Gastrocnemius medialis (tissue), 4 donors: ENCODE measurements at regions of chr17 and their contacts with region 1.

Region 1: GRCh38 chr17:10992106-10992880 is 154.4 kb upstream of the PIRT start:
- DNase-seq: no peak
- ATAC-seq: no peak
- H3K4me3 ChIP-seq: no peak overlapping the region
- H3K27ac ChIP-seq: no peak overlapping the region
- H3K4me1 ChIP-seq: no peaks in the 10 kb centered on the region
- H3K27me3 ChIP-seq: no peaks in the 10 kb centered on the region
- CTCF ChIP-seq: no peak
- POLR2A ChIP-seq: no peak

Region 2: DNA sequence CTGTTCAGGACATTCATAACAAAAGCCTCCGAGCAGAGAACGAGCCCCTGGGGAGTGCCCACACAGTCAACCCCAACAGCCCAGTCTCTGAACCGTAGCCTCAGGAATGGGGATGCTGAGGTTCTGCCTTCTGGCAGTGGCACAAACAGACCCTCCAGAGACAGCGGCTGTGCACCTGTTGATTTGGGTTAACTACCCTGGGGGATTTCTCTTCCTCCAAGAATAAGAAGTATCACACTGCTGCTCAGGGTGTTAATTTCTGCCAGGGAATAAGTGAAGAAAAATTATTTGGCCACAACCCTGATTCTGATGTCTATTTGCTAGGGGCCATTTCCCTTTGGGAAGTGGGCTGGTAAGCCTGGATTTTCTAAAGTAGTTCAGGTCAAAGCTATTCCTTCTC is 103.4 kb before region 1 on chr17:
- in situ Hi-C with region 1: no loop called
- intact Hi-C with region 1: no loop called
- DNase-seq: no peak
- ATAC-seq: no peak
- H3K4me3 ChIP-seq: no peak overlapping the region
- H3K27ac ChIP-seq: no peak overlapping the region
- H3K4me1 ChIP-seq: no peaks in the 10 kb centered on the region
- H3K27me3 ChIP-seq: peaks cover 0 to 3% (median 0%) of the 10 kb centered on the region in 3 donors
- CTCF ChIP-seq: no peak
- POLR2A ChIP-seq: no peak

Region 3: DNA sequence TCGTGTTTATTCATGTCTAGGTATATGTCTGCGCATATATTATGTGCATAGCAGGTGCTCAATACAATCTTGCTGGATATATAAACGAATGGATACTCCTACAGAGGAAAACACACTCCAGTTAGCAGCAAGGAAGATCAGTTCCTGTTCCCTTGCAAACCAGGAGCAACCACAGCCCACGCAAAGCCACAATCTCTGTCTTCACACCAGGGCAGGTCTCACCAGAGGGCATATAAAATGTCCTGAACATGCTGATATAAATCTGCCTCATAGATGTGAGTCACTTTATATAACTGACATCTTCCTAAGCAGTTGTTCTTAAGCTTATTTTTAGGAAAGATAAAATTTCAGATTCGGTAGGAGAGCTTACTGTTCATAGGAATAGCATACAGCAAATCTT is 52.9 kb before region 1 on chr17:
- in situ Hi-C with region 1: loop called in 1 of 4 experiments (anchors 10 kb)
- intact Hi-C with region 1: no loop called
- DNase-seq: no peak
- ATAC-seq: no peak
- H3K4me3 ChIP-seq: no peak overlapping the region
- H3K27ac ChIP-seq: no peak overlapping the region
- H3K4me1 ChIP-seq: no peaks in the 10 kb centered on the region
- H3K27me3 ChIP-seq: no peaks in the 10 kb centered on the region
- CTCF ChIP-seq: no peak
- POLR2A ChIP-seq: no peak

Region 4: DNA sequence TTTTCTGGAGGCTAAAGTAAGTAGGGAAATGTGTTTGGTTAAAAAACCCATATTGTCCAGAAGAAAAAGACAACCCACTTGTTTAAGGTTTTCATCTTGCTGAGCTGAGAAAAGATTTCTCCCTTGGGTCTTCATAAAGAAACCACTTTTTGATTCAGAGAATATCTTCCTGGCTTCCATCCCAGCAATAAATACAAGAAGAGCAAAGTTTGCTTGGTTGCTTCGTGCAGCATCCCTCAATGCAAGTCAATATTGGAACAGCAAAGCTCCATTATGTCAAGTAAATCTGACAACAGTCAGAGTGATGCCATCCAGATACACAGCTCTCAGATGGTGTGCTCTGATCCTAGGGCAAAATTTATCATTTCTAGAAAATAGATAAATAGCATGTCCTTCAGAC is 35.5 kb before region 1 on chr17:
- in situ Hi-C with region 1: no loop called
- intact Hi-C with region 1: no loop called
- DNase-seq: no peak
- ATAC-seq: no peak
- H3K4me3 ChIP-seq: no peak overlapping the region
- H3K27ac ChIP-seq: no peak overlapping the region
- H3K4me1 ChIP-seq: no peaks in the 10 kb centered on the region
- H3K27me3 ChIP-seq: no peaks in the 10 kb centered on the region
- CTCF ChIP-seq: no peak
- POLR2A ChIP-seq: no peak

Region 5: DNA sequence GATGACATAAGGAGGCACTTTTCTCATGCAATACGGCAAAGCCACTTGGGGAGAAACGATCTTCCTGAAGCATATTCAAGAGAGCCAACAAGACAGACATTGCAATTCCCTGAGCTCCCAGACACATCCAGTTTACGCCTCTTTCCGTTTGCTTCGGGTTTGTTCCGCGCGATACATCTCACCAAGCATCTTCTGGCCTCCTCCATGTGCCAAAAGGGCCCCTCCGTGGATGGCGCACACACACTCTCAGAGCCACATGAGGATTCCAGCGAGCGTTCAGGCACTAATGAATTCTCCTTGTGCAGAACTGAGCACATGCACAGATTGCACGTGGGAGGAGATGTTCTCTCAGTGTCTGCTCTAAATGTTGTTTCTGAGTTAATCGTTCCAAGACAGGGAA is 102.0 kb after region 1 on chr17:
- in situ Hi-C with region 1: loop called in 1 of 4 experiments (anchors 25 kb)
- intact Hi-C with region 1: no loop called
- DNase-seq: no peak
- ATAC-seq: no peak
- H3K4me3 ChIP-seq: no peak overlapping the region
- H3K27ac ChIP-seq: no peak overlapping the region
- H3K4me1 ChIP-seq: no peaks in the 10 kb centered on the region
- H3K27me3 ChIP-seq: no peaks in the 10 kb centered on the region
- CTCF ChIP-seq: no peak
- POLR2A ChIP-seq: no peak